ENCODE measurements at regions of chr11 and their contacts with region 1.

Region 1: DNA sequence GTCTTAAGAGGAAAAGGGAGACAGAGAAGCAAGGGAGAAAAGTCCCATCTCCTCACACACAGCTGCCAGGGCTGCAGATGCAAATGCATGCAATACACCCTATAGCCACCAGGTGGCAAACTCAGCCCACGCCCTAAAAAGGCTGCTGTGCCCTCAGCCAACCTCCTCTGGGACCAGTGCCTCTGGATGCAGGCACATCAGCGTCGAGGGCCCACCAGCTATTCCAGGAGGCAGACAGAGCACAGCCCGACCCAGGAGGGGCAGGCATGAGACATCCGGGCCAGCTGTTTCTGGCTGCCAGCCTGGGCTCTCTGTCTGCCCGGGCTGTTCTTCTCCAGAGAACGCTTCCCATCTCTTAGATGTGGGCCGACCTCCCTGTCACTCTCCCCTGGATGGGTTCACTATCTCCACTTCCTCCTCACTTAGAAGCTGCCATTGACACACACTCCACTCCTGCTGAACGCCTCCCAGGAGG is 39.7 kb downstream of the TPBGL start:
- DNase-seq: peak; percentile 66
- ATAC-seq: peak; percentile 96
- H3K4me3 ChIP-seq: no peak overlapping the region
- H3K27ac ChIP-seq: no peak overlapping the region
- H3K4me1 ChIP-seq: peaks cover 2% of the 10 kb centered on the region
- H3K27me3 ChIP-seq: no peaks in the 10 kb centered on the region
- CTCF ChIP-seq: peak; percentile 93
- POLR2A ChIP-seq: peak; percentile 55
- RAD21 ChIP-seq: peak; percentile 99

Region 2: GRCh38 chr11:75328426-75329277 is 48.4 kb after region 1 on chr11:
- CTCF ChIA-PET with region 1: interaction called, 11 read pairs
- POLR2A ChIA-PET with region 1: no interaction called
- dilution Hi-C with region 1: no loop called
- in situ Hi-C with region 1: no loop called
- intact Hi-C with region 1: loop called (anchors 1 kb)
- DNase-seq: peak; percentile 81
- ATAC-seq: peak; percentile 75
- H3K4me3 ChIP-seq: no peak overlapping the region
- H3K27ac ChIP-seq: peak overlapping the region; percentile 89; the same call in 1 of the 2 replicates
- H3K4me1 ChIP-seq: peaks cover 29% of the 10 kb centered on the region
- H3K27me3 ChIP-seq: no peaks in the 10 kb centered on the region
- CTCF ChIP-seq: peak; percentile 88
- POLR2A ChIP-seq: 0 out of 2 replicates have a peak, but pooled peaks have one; percentile 39
- RAD21 ChIP-seq: peak; percentile 94

Region 3: GRCh38 chr11:75380711-75381420 is 100.6 kb after region 1 on chr11:
- CTCF ChIA-PET with region 1: interaction called, 24 read pairs
- POLR2A ChIA-PET with region 1: no interaction called
- dilution Hi-C with region 1: no loop called
- in situ Hi-C with region 1: loop called (anchors 5 kb)
- intact Hi-C with region 1: loop called (anchors 1 kb)
- DNase-seq: no peak
- ATAC-seq: peak; percentile 40; the same call in 1 of the 2 replicates
- H3K4me3 ChIP-seq: no peak overlapping the region
- H3K27ac ChIP-seq: no peak overlapping the region
- H3K4me1 ChIP-seq: no peaks in the 10 kb centered on the region; the same call in 1 of the 2 replicates
- H3K27me3 ChIP-seq: no peaks in the 10 kb centered on the region
- CTCF ChIP-seq: no peak
- POLR2A ChIP-seq: no peak
- RAD21 ChIP-seq: no peak

Region 4: GRCh38 chr11:75388386-75389275 is 108.4 kb after region 1 on chr11:
- CTCF ChIA-PET with region 1: interaction called, 24 read pairs
- POLR2A ChIA-PET with region 1: no interaction called
- dilution Hi-C with region 1: no loop called
- in situ Hi-C with region 1: loop called (anchors 5 kb)
- intact Hi-C with region 1: loop called (anchors 1 kb)
- DNase-seq: peak; percentile 81
- ATAC-seq: peak; percentile 91
- H3K4me3 ChIP-seq: no peak overlapping the region
- H3K27ac ChIP-seq: no peak overlapping the region
- H3K4me1 ChIP-seq: peaks cover 4% of the 10 kb centered on the region
- H3K27me3 ChIP-seq: peaks cover 4% of the 10 kb centered on the region
- CTCF ChIP-seq: peak; percentile 93
- POLR2A ChIP-seq: no peak
- RAD21 ChIP-seq: peak; percentile 91

Region 5: GRCh38 chr11:75525596-75526541 is 245.6 kb after region 1 on chr11 and contains the start of gene GDPD5:
- CTCF ChIA-PET with region 1: no interaction called
- POLR2A ChIA-PET with region 1: no interaction called
- dilution Hi-C with region 1: no loop called
- in situ Hi-C with region 1: loop called (anchors 25 kb)
- intact Hi-C with region 1: loop called (anchors 5 kb)
- DNase-seq: peak; percentile 64
- ATAC-seq: peak; percentile 98
- H3K4me3 ChIP-seq: peak within 1 kb of the TSS; percentile 90
- H3K27ac ChIP-seq: peak within 1 kb of the TSS; percentile 25; the same call in 1 of the 2 replicates
- H3K4me1 ChIP-seq: no peaks in the 10 kb centered on the region; the same call in 1 of the 2 replicates
- H3K27me3 ChIP-seq: peaks cover 10% of the 10 kb centered on the region; the same call in 1 of the 2 replicates
- CTCF ChIP-seq: peak; percentile 60
- POLR2A ChIP-seq: no peak
- RAD21 ChIP-seq: peak; percentile 45
- total RNA-seq, gene GDPD5: 1.7 and 2.0 TPM in 2 replicates

Measured in IMR-90 (cell line).